ENCODE measurements at regions of chr9 and their contacts with region 1.

Region 1: GRCh38 chr9:8633784-8634183 is 834.2 kb upstream of the DMAC1 start:
- DNase-seq: no peak
- ATAC-seq: no peak
- H3K4me3 ChIP-seq: no peak overlapping the region
- H3K27ac ChIP-seq: no peak overlapping the region
- H3K4me1 ChIP-seq: no peaks in the 10 kb centered on the region
- H3K27me3 ChIP-seq: no peaks in the 10 kb centered on the region
- CTCF ChIP-seq: no peak
- EP300 ChIP-seq: no peak
- POLR2A ChIP-seq: no peak
- RAD21 ChIP-seq: no peak

Region 2: DNA sequence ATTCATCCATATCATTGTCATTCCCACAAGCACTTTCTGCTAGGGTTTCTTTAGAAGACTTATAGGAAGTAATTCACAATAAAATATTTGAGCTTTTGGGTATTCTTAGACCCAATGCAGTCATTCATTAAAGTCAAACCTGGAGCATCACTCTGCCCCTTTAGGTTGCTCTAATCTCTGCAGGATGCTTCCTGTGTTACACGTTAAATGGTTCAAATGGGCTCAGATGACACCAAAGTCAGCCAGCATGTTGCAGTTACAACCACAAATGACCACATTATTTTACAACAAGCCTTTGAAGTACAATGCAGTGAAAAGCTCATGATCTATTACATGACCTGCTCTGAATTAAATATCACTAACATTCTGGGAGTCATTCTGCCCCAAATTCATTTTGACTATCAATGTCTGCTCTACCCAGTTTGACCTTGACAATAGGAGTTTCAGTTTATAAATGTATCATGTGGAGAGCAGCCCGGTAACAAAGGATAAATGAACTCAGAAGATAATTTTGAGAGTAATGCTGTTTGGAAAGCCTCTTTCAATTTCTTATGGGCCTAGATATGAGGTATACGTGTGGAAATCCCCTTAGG is 165.6 kb before region 1 on chr9:
- CTCF ChIA-PET with region 1: no interaction called
- POLR2A ChIA-PET with region 1: no interaction called
- RAD21 ChIA-PET with region 1: no interaction called
- SMC1A ChIA-PET with region 1: no interaction called
- in situ Hi-C with region 1: no loop called
- intact Hi-C with region 1: no loop called
- DNase-seq: no peak
- ATAC-seq: no peak
- H3K4me3 ChIP-seq: no peak overlapping the region
- H3K27ac ChIP-seq: no peak overlapping the region
- H3K4me1 ChIP-seq: no peaks in the 10 kb centered on the region
- H3K27me3 ChIP-seq: no peaks in the 10 kb centered on the region
- CTCF ChIP-seq: no peak
- EP300 ChIP-seq: no peak
- POLR2A ChIP-seq: no peak
- RAD21 ChIP-seq: no peak

Region 3: GRCh38 chr9:8806150-8806549 is 172.4 kb after region 1 on chr9:
- CTCF ChIA-PET with region 1: no interaction called
- POLR2A ChIA-PET with region 1: interaction called, 12 read pairs
- RAD21 ChIA-PET with region 1: no interaction called
- SMC1A ChIA-PET with region 1: no interaction called
- in situ Hi-C with region 1: no loop called
- intact Hi-C with region 1: no loop called
- DNase-seq: no peak
- ATAC-seq: no peak
- H3K4me3 ChIP-seq: no peak overlapping the region
- H3K27ac ChIP-seq: no peak overlapping the region
- H3K4me1 ChIP-seq: no peaks in the 10 kb centered on the region
- H3K27me3 ChIP-seq: no peaks in the 10 kb centered on the region
- CTCF ChIP-seq: no peak
- EP300 ChIP-seq: no peak
- POLR2A ChIP-seq: no peak
- RAD21 ChIP-seq: no peak